CD4-positive, alpha-beta T cell (primary cell): ENCODE measurements at regions of chr6 and their contacts with region 1.

Region 1: DNA sequence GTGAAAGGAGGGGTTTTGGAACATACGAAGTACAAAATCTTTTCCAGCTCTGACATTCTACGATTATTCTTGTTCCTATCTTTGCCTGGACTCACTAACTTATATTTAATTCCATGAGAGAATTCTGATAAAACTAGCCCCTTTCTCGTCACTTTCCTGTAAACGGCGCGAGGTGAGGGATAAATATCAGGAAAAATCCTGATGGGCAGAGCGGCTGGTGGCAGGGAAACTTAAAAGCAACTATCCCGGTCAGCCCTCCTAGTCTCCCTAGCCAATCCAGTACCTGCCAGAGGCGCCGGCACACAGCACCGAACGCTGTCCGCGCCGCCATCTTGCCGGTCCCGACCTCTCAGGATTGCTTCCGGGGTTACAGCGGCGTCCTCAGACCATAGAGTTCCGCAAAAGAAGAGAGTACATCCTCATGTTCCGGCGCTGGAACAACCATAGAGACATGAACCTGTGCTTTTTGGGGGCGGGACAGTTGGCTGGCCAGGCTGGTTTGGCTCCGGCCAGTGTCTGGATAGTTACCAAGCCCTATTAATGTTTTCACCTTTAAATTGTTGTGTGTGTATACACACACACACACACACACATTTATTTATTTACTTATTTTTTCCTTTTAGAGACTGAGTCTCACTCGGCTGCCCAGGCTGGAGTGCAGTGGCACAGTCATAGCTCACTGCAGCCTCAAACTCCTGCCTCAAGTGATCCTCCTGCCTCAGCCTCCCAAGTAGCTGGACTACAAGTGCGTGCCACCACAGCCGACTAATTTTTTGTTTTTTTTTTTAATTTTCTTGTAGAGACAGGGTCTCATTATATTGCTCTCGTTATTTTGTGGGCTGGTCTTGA is at the start of gene MRPS10:
- DNase-seq: peak; percentile 84 to 96 (median 86)
- ATAC-seq: peak; percentile 98
- H3K4me3 ChIP-seq: peak within 1 kb of the TSS; percentile 77
- H3K4me3 Mint-ChIP-seq: peak within 1 kb of the TSS; percentile 97
- H3K27ac ChIP-seq: peak within 1 kb of the TSS; percentile 60 to 65
- H3K27ac Mint-ChIP-seq: peak within 1 kb of the TSS; percentile 92
- H3K4me1 ChIP-seq: peaks cover 26% of the 10 kb centered on the region
- H3K4me1 Mint-ChIP-seq: peaks cover 23% of the 10 kb centered on the region
- H3K27me3 ChIP-seq: no peaks in the 10 kb centered on the region
- H3K27me3 Mint-ChIP-seq: no peaks in the 10 kb centered on the region
- CTCF ChIP-seq: no peak
- total RNA-seq, gene MRPS10: 17.1 to 18.4 TPM

Region 2: GRCh38 chr6:41787219-41787917 is 430.4 kb before region 1 on chr6 and contains the start of gene TOMM6:
- CTCF ChIA-PET with region 1: interaction called, 7 read pairs
- POLR2A ChIA-PET with region 1: interaction called, 12 read pairs
- intact Hi-C with region 1: no loop called
- DNase-seq: peak; percentile 91 to 97 (median 93)
- ATAC-seq: peak; percentile 77
- H3K4me3 ChIP-seq: peak within 1 kb of the TSS; percentile 78
- H3K4me3 Mint-ChIP-seq: peak within 1 kb of the TSS; percentile 92
- H3K27ac ChIP-seq: peak within 1 kb of the TSS; percentile 87 to 89
- H3K27ac Mint-ChIP-seq: peak within 1 kb of the TSS; percentile 96
- H3K4me1 ChIP-seq: peaks cover 23% of the 10 kb centered on the region
- H3K4me1 Mint-ChIP-seq: peaks cover 27% of the 10 kb centered on the region
- H3K27me3 ChIP-seq: no peaks in the 10 kb centered on the region
- H3K27me3 Mint-ChIP-seq: no peaks in the 10 kb centered on the region
- CTCF ChIP-seq: peak; percentile 90
- total RNA-seq, gene TOMM6: 78.8 to 83.2 TPM

Region 3: DNA sequence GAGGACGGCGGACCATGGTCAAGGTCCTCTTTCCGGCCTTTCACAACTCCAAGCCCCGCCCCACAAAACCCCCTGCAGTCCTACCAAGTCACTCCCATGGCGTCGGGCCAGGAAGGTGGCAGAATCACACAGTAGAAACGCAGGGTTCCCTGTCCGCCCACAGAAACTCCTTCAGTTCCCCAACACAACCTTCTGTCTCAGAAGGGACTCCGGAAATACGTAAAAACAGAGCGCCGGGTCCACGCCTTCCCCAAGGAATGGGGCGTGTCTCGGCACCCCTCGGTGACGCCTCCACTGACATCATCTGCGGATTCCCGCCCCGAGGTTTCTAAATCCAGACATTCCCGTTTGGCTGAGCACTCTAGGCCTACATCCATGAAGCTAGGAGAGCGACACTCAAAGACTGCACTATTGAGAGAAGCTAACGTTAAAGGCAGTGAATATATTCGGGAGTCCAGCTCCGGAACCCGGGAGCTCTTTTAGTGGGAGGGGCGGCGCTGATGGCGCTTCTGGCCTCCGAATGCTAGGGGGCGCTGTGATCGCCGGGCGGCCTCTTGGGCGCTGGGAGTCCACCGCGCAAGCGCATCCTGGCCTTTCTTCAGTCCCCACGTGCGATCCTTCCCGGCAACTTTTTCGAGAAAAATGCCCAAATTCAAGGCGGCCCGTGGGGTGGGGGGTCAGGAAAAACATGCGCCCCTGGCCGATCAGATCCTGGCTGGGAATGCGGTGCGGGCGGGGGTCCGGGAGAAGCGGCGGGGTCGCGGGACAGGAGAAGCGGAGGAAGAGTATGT is 296.6 kb before region 1 on chr6 and contains the starts of genes BYSL and MED20:
- CTCF ChIA-PET with region 1: interaction called, 4 read pairs
- POLR2A ChIA-PET with region 1: interaction called, 3 read pairs
- intact Hi-C with region 1: loop called (anchors 1 to 2 kb)
- DNase-seq: peak; percentile 89 to 97 (median 93)
- ATAC-seq: peak; percentile 90
- H3K4me3 ChIP-seq: peak within 1 kb of the TSS; percentile 78
- H3K4me3 Mint-ChIP-seq: peak within 1 kb of the TSS; percentile 99
- H3K27ac ChIP-seq: peak within 1 kb of the TSS; percentile 97 to 98
- H3K27ac Mint-ChIP-seq: peak within 1 kb of the TSS; percentile 94
- H3K4me1 ChIP-seq: peaks cover 31% of the 10 kb centered on the region
- H3K4me1 Mint-ChIP-seq: peaks cover 55% of the 10 kb centered on the region
- H3K27me3 ChIP-seq: no peaks in the 10 kb centered on the region
- H3K27me3 Mint-ChIP-seq: no peaks in the 10 kb centered on the region
- CTCF ChIP-seq: peak; percentile 97
- total RNA-seq, gene BYSL: 1.2 to 1.6 TPM
- total RNA-seq, gene MED20: 1.3 to 1.6 TPM

Region 4: GRCh38 chr6:42104095-42104806 is 113.5 kb before region 1 on chr6:
- CTCF ChIA-PET with region 1: interaction called, 10 read pairs
- POLR2A ChIA-PET with region 1: interaction called, 3 read pairs
- intact Hi-C with region 1: no loop called
- DNase-seq: peak; percentile 40 to 85 (median 62)
- ATAC-seq: peak; percentile 90
- H3K4me3 ChIP-seq: peak overlapping the region; percentile 49
- H3K4me3 Mint-ChIP-seq: peak overlapping the region; percentile 63
- H3K27ac ChIP-seq: no peak overlapping the region
- H3K27ac Mint-ChIP-seq: no peak overlapping the region
- H3K4me1 ChIP-seq: peaks cover 11% of the 10 kb centered on the region
- H3K4me1 Mint-ChIP-seq: peaks cover 8% of the 10 kb centered on the region
- H3K27me3 ChIP-seq: no peaks in the 10 kb centered on the region
- H3K27me3 Mint-ChIP-seq: no peaks in the 10 kb centered on the region
- CTCF ChIP-seq: peak; percentile 92

Region 5: DNA sequence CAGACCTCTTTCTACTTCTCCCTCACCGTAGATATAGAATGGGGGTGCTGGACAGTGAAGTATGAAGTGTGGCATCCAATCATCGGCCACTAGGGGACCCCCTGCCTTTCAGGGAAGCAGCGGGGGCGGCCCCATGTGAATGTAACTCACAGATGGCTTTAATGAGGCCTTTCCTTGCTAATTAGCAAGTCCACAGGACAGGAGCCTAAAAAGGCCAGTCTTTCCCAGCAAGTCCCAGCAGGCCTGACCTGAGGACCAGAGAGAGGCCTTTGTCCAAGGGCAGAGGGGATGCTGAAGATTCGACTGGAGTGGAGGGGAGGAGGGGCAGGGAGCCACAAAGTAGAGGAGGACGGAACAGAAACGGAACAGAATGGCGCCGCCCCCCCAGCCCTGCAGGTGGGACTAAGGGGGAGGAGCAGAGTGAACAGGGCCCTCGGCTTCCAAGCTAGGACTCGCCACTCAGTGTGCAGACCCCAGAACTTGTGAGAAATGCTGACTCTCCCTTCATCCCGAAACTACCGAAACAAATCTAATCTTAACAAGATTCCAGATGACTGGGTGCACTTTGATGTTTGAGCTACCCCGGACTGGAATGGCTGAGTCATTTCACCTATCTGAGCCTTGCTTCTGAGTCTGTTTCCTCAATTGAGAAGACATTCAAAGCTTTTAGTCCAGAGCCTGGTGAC is 81.1 kb before region 1 on chr6:
- CTCF ChIA-PET with region 1: no interaction called
- POLR2A ChIA-PET with region 1: no interaction called
- intact Hi-C with region 1: no loop called
- DNase-seq: peak in 2 of 14 experiments; percentile 11 to 14
- ATAC-seq: no peak
- H3K4me3 ChIP-seq: no peak overlapping the region
- H3K4me3 Mint-ChIP-seq: no peak overlapping the region
- H3K27ac ChIP-seq: no peak overlapping the region
- H3K27ac Mint-ChIP-seq: no peak overlapping the region
- H3K4me1 ChIP-seq: peaks cover 4% of the 10 kb centered on the region
- H3K4me1 Mint-ChIP-seq: peaks cover 6% of the 10 kb centered on the region
- H3K27me3 ChIP-seq: peaks cover 8 to 12% of the 10 kb centered on the region in 2 experiments
- H3K27me3 Mint-ChIP-seq: peaks cover 24% of the 10 kb centered on the region
- CTCF ChIP-seq: no peak

Region 6: DNA sequence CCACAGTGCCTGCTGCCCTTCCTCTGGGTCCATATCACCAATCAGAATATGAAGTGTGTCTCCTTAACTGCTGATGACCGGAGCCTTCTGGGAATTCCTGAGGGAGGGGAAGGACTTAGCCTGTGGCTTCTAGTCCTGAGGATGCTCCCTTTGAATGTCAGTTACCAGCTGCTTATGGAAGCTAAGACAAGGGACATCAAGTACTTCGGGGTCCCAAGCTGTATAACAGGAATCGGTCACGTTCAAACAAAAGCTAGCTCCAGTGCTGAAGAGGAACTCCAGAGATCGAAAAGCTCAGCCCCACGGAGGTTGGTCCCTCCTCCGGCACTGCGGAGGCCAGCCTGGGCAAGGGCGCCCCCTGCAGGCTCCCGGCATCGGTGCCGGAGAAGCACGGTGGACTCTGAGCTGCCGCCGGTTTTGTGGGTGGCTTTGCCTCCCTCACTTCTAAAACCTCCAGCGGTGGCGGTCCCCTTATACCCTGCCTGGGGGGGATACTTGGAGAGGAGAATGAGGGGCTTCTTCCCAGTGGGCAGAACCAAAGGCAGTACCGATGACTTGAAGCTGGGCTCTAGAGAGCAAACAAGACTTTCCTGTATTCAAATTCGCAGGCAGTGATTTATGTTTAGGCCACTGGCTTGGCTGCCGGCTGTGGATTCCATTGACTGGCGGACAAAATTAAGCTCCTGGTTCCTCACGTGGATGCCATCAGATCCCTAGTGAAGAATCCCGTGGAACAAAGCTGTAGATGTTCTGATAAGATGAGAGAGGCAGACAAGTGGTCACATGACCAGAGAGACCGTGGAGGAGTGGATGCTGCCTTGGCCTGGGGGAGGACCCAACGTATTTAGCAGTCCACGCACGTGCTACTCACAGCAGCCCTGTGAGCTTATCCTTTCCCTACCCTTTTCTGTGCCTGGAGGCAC is 329.9 kb after region 1 on chr6:
- CTCF ChIA-PET with region 1: interaction called, 11 read pairs
- POLR2A ChIA-PET with region 1: interaction called, 6 read pairs
- intact Hi-C with region 1: loop called (anchors 2 to 5 kb)
- DNase-seq: peak; percentile 72 to 91 (median 86)
- ATAC-seq: peak; percentile 98
- H3K4me3 ChIP-seq: peak overlapping the region; percentile 38
- H3K4me3 Mint-ChIP-seq: peak overlapping the region; percentile 66
- H3K27ac ChIP-seq: no peak overlapping the region
- H3K27ac Mint-ChIP-seq: peak overlapping the region; percentile 65
- H3K4me1 ChIP-seq: peaks cover 11% of the 10 kb centered on the region
- H3K4me1 Mint-ChIP-seq: peaks cover 12% of the 10 kb centered on the region
- H3K27me3 ChIP-seq: no peaks in the 10 kb centered on the region
- H3K27me3 Mint-ChIP-seq: peaks cover 13% of the 10 kb centered on the region
- CTCF ChIP-seq: peak; percentile 93

Region 7: GRCh38 chr6:43013843-43014433 is 796.2 kb after region 1 on chr6 and contains the starts of genes KLHDC3 and MEA1:
- CTCF ChIA-PET with region 1: no interaction called
- POLR2A ChIA-PET with region 1: no interaction called
- intact Hi-C with region 1: loop called in 1 of 2 experiments (anchors 2 kb)
- DNase-seq: peak; percentile 95 to 100 (median 98)
- ATAC-seq: peak; percentile 91
- H3K4me3 ChIP-seq: peak within 1 kb of the TSS; percentile 86
- H3K4me3 Mint-ChIP-seq: peak within 1 kb of the TSS; percentile 88
- H3K27ac ChIP-seq: peak within 1 kb of the TSS; percentile 51 to 59
- H3K27ac Mint-ChIP-seq: peak within 1 kb of the TSS; percentile 81
- H3K4me1 ChIP-seq: peaks cover 55% of the 10 kb centered on the region
- H3K4me1 Mint-ChIP-seq: peaks cover 59% of the 10 kb centered on the region
- H3K27me3 ChIP-seq: no peaks in the 10 kb centered on the region
- H3K27me3 Mint-ChIP-seq: no peaks in the 10 kb centered on the region
- CTCF ChIP-seq: no peak
- total RNA-seq, gene KLHDC3: 21.0 to 22.3 TPM
- total RNA-seq, gene MEA1: 13.6 to 17.0 TPM